ENCODE measurements at regions of chr6 and their contacts with region 1.

Region 1: DNA sequence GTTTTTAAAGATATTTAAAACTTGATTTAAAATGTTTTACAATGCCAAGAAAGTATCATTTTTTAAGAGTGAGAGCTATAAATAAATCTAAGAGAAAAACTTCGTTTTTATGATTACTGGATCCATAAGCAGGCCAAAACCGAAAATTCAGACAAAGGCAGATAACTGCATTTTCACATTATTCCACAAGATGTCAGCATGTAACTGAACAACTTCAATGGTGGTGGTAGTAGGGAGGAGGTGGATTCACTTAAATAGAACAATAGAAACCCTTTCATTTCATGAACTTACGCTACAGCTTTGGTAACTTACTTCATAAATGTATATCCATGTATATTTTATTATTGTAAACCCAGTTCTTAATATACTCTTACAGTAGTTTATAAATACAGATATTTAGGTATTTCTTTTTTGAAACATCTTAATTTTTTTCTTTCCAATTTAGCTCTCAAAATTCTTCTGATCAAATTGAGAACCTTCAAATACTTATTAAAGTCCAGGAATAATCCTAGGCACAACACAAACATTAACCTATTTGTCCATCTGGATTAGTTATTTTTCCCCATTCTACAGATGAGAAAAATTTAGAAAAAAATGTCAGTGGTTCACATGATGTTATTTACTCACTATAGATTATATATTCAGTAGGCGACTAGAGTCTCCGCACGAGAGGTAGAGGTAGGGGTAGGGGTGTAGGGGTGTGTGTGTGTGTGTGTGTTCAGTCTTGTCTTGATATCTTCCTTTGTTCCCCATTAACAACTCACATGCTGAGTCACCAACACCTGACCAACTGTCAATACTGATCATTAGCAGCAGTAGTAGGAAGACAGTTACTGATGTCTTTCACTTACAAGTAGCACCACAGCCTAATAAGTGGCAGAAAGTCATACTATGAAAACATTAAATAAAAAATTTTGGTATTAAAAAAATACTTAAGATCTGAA is 111.5 kb downstream of the ARHGAP18 start:
- DNase-seq: no peak
- H3K4me3 ChIP-seq: no peak overlapping the region
- H3K27ac ChIP-seq: no peak overlapping the region
- H3K4me1 ChIP-seq: no peaks in the 10 kb centered on the region
- H3K27me3 ChIP-seq: no peaks in the 10 kb centered on the region
- CTCF ChIP-seq: peak; percentile 73 to 86 (median 85)
- POLR2A ChIP-seq: no peak

Region 2: DNA sequence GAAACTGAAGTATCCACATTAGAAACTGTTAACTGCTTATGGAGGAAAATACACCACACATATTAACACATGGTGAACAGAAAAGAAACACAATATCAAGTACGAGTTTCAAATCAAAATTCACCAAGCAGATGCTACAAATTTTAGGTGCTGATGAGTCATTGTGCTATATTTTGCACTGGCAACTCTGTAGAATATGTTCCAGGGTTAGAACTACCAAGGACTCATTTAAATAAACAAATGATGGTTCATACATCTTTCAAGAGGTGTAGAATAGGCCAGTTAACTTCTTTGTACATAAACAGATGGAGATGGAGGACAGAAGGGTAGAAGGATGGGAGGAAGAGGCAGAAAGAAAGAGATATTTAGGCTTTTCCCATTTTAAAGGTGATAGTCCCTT is 73.5 kb before region 1 on chr6:
- intact Hi-C with region 1: no loop called
- DNase-seq: no peak
- H3K4me3 ChIP-seq: no peak overlapping the region
- H3K27ac ChIP-seq: no peak overlapping the region
- H3K4me1 ChIP-seq: no peaks in the 10 kb centered on the region
- H3K27me3 ChIP-seq: no peaks in the 10 kb centered on the region
- CTCF ChIP-seq: no peak
- POLR2A ChIP-seq: no peak

Region 3: DNA sequence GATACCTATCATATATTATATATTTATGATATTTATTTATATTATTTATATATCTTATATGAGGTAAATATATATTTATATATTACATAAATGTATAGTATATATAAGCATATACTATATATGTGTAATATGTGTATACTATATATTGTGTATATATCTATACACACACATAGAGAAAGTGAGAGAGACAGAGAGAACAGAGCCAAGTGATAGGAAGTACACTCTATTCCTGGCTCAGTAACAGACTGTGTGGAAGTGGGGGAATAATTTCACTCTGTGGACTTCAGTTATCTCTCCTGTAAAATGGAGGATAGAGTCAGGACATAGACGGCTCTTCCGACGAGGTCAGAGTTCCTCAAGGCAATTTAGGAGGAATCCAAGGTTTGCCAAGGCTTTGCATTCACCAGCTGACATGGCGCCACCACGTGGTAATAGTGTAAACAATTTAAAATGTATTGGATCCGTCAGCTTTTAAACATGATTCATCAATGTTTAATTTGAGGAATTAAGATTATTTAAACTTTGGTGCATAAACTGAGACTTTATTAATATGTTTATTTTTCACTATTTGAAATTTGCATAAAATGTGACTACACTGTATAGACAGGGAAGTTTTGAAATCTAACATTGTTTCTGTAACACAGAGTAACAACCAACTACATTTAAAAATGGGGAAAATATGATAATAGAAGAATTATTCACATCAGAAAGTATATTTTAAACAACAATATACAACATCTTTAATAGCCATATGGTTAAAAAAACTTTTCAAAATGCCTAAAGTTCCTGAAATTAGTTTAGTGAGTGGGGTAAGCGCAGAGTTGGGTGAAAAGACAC is 338.0 kb after region 1 on chr6:
- intact Hi-C with region 1: loop called (anchors 10 kb)
- DNase-seq: no peak
- H3K4me3 ChIP-seq: no peak overlapping the region
- H3K27ac ChIP-seq: no peak overlapping the region
- H3K4me1 ChIP-seq: no peaks in the 10 kb centered on the region
- H3K27me3 ChIP-seq: no peaks in the 10 kb centered on the region
- CTCF ChIP-seq: no peak
- POLR2A ChIP-seq: no peak

Region 4: GRCh38 chr6:130020907-130021629 is 422.6 kb after region 1 on chr6:
- intact Hi-C with region 1: loop called (anchors 10 kb)
- DNase-seq: peak in 1 of 2 donors; percentile 96
- H3K4me3 ChIP-seq: peak overlapping the region; percentile 92
- H3K27ac ChIP-seq: peak overlapping the region; percentile 97
- H3K4me1 ChIP-seq: peaks cover 16% of the 10 kb centered on the region
- H3K27me3 ChIP-seq: no peaks in the 10 kb centered on the region
- CTCF ChIP-seq: peak; percentile 59 to 77 (median 61)
- POLR2A ChIP-seq: peak in 1 of 2 donors; percentile 21

Measured in vagina (tissue), 2 donors.